Cardiac septum (tissue), 1 donor: ENCODE measurements at regions of chr11 and their contacts with region 1.

Region 1: DNA sequence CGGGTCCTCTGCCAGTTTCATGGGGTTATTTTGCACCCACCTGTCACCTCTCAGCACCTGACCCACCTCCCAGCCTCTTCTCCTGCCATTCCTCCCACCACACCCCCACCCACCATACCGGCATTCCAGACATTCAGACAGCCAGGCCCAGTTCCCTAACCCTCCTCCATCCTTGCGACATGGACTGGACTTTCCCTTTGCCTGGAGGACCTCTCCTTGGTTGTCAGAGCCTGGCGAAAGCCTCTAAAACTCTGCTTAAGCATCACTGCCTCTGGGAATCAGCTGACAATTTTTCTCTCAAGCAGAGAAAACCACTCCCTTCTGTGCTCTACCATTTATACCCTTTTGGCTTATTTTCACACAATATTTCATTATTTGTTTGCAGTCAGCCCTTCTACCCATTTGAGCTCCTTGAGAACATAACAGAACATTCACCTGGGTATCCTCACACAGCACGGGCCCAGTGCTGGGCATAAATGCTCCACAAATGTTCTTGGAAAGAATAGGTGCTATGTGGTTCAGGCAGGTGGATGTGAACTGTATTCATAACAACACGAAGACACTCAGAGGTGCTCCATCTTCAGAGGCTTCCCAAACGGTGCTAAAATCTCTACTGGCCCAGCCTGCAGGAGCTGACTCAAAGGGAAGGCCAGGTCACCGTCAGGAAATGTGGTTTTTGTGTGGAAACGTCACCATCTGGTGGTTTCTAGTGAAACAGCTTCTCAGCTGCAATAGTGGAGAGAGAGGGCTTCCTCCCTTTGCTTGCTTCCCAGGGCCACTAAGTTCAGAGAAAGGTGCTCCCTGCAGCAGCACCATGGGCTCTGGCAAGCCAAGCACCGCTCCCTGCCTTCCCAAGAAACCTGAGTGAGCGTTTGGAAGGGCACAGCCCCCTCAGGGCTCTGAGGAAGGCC is 10.4 kb downstream of the SPATA19 start:
- DNase-seq: peak; percentile 61

Region 2: DNA sequence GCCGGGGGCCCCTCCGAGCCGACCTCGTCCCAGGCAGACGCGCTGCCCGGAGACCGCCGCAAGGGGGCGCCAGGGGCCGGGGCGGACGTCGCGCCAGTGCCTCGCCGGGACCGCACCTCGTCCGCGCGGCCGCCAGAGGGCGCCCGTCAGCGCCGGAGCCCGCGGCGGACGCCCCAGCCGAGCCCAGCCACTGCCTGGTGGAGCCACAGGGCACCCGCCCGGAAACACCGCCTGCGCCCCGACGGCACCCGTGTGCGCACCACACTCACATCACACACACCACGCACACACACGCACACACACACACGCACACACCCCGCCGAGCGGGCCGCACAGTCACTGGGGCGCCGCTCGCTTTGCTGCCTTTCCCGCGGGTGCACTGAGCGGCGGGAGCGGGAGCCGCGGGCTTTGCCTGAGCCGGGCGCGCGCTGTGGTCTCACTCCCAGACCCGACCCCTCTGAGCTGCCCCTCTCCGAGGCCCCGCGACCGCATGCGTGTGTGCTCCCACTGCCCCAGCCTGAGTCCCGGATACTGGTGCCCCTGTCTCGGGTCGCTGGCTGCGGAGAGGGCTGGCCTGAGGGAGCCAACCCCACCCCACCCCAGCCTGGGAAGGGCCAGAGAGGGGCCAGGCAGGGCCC is 752.0 kb before region 1 on chr11:
- intact Hi-C with region 1: loop called (anchors 2 kb)
- DNase-seq: no peak

Region 3: DNA sequence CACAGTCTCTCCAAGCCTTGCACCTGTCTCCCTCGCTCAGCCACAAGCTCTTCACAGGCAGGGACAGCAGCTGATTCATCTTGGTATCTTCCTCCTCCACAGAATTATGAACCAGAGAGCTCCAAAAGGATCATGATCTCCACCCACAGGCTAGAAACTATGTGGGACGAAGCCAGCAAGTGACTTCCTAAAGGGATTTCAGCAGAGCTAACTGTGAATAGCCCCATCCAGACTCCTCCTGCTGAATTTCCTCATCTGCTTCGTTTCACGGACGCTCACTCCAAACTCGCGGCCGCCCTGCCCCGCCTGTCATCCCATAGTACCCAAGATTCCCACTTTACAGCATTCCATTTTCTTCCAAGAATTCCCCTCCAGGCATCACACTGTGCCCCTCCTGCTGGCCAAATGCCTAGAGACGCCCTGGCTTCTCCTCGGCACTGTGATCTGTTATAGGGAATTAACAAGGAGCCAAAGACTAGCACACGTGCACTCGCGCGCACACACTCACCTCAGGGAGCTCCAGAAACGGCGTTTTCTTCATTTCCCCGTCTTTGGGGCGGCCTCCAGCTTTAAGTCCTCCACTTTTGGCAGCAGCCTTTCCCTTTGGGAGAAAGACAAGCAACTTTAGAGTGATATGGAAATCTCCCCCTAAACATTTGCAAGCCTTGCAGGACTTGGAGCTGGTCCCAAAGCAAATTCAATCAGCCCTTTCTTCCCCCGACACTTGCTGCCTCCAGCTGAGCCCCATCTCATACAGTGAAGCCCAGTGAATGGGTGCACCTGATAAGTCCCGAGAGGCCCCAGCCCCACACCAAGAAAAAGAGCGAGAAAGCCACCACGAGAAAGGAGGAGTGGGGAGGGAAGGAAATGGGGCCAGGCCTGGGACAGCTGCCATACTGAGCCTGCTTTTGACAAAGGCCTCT is 25.1 kb before region 1 on chr11:
- intact Hi-C with region 1: no loop called
- DNase-seq: peak; percentile 35